Mammary epithelial cell (primary cell): ENCODE measurements at regions of chr1 and their contacts with region 1.

Region 1: GRCh38 chr1:20696397-20697329 is 21.1 kb downstream of the KIF17 start:
- DNase-seq: peak; percentile 86
- H3K4me3 ChIP-seq: peak overlapping the region; percentile 49 to 75 (median 49)
- H3K27ac ChIP-seq: peak overlapping the region; percentile 20
- H3K4me1 ChIP-seq: peaks cover 22% of the 10 kb centered on the region
- H3K27me3 ChIP-seq: no peaks in the 10 kb centered on the region
- CTCF ChIP-seq: peak; percentile 56 to 93

Region 2: DNA sequence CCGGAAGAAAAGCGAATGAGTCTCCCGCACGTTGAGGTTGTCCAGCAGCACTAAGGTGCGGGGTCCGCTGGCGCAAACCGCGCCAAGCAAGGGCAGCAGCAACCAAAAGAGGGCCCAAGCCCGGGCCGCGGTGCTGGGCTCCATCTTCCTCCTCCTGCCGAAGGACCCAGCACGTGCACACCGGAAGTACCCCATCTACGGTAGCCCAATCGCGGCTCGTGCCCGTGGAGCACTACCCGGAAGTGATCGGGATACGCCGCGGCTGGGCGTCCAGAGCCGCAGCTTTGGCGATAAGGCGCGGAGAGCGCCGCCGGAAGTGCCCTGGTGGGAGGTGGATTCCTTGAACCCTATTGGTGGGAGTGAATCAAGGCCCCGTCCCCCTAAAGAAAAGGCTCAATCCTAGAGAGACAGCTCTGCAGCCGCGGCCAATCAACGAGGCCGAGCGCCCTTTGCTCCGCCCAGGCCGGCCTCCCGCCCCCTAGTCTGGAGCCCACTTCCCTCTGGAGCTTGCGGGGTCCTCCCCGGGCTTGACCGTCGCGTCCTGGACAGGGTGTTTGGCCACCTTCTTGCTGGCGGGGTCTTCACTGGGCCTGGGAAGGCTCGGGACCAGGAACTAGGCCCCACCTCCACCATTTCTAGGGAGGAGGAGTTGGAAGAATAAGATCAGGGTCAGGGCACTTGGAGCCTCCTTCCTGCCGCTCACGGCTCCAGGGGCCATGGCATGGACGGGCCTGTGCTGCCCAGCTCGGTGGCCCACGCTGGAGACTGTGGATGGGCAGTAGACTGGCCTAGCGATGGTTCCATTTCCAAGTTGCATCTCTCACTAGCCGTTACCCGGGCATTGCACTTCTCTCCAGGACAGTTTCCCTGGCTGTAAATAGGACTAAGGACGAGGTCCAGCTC is 35.2 kb before region 1 on chr1 and contains the start of gene DDOST:
- CTCF ChIA-PET with region 1: interaction called, 10 read pairs
- dilution Hi-C with region 1: no loop called
- in situ Hi-C with region 1: no loop called
- intact Hi-C with region 1: no loop called
- DNase-seq: peak; percentile 97
- H3K4me3 ChIP-seq: peak within 1 kb of the TSS; percentile 90 to 98 (median 95)
- H3K27ac ChIP-seq: peak within 1 kb of the TSS; percentile 35
- H3K4me1 ChIP-seq: peaks cover 20% of the 10 kb centered on the region
- H3K27me3 ChIP-seq: no peaks in the 10 kb centered on the region
- CTCF ChIP-seq: peak; percentile 32 to 61
- total RNA-seq, gene DDOST: 181 to 238 TPM

Region 3: DNA sequence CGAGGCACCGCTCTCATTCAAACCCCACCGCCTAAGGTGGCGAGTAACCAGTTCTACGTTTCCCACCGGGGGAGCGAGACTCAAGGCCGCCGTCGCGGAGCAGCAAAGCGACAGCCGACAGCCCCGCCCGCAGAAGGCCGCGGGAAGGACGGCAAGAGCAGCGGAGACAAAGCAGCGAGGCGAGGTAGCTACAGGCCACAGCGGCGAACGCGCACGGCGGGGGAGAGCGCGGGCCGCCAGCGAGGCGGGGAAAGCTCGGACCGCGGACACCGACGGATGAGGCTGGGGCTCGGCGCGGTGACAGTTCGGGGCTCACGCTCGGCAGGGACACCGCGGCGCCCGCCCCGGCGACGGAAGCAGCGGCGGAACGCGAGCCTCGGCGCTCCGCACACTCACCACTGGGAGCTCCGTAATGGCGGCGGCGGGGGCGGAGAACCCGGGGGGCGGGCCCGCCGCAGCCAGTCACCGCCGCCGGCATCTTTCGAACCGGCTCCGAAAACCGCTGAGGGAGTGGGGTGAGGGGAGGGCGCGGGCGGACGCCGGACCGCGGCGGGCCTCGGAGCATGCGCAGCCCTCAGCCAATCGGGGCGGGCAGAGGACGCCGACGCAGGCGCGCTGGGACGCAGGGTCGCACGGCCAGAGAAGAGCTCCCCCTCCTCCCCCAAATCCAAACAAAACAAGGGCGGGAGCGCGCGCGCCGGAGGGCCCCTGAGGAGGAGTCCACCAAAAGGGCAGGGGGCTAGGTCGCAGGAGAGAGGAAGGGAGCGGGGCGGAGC is 89.8 kb after region 1 on chr1:
- CTCF ChIA-PET with region 1: no interaction called
- dilution Hi-C with region 1: loop called (anchors 5 kb)
- in situ Hi-C with region 1: no loop called
- intact Hi-C with region 1: loop called (anchors 2 kb)
- DNase-seq: peak; percentile 95
- H3K4me3 ChIP-seq: peak overlapping the region; percentile 77 to 99 (median 94)
- H3K27ac ChIP-seq: peak overlapping the region; percentile 91
- H3K4me1 ChIP-seq: peaks cover 21% of the 10 kb centered on the region
- H3K27me3 ChIP-seq: no peaks in the 10 kb centered on the region
- CTCF ChIP-seq: peak in 1 of 2 donors; percentile 5

Region 4: DNA sequence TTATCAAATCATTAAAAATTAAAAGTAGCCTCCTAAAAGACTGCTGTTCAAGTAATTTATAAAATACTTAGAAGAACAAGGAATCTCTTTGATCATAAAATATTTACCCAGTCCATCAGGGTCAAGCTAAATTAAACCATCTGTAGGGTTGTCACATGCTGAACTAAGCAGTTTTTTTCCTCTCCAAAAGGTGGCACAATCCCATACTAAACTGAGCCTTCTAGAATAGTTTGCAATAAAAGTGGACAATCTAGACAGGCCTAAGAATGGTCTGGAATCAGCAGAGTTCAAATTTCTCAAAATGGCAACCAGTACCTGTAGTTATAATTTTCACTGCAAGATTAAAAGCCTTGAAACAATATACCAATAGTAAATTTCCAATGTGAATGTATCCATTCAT is 285.3 kb after region 1 on chr1:
- CTCF ChIA-PET with region 1: no interaction called
- dilution Hi-C with region 1: no loop called
- in situ Hi-C with region 1: no loop called
- intact Hi-C with region 1: loop called (anchors 10 kb)
- DNase-seq: peak; percentile 16
- H3K4me3 ChIP-seq: no peak overlapping the region
- H3K27ac ChIP-seq: no peak overlapping the region
- H3K4me1 ChIP-seq: peaks cover 11% of the 10 kb centered on the region
- H3K27me3 ChIP-seq: no peaks in the 10 kb centered on the region
- CTCF ChIP-seq: peak in 1 of 2 donors; percentile 44

Region 5: DNA sequence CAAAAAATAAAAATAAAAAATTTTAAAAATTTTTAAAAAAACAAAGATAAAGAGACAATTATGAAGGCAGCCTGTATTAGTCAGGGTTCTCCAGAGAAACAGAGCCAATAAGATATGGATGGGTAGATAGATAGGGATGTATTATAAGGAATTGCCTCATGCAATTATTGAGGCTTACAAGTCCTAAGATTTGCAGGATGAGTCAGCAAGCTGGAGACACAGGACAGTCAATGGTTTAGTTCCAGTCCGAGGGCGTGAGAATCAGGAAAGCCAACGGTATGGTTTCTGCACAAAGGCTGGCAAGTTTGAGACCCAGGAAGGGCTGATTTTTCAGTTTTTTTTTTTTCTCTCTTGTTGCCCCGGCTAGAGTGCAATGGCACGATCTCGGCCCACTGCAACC is 504.1 kb after region 1 on chr1:
- CTCF ChIA-PET with region 1: interaction called, 10 read pairs
- dilution Hi-C with region 1: no loop called
- in situ Hi-C with region 1: loop called in 1 of 2 experiments (anchors 10 kb)
- intact Hi-C with region 1: loop called (anchors 1 kb)
- DNase-seq: no peak
- H3K4me3 ChIP-seq: no peak overlapping the region
- H3K27ac ChIP-seq: no peak overlapping the region
- H3K4me1 ChIP-seq: no peaks in the 10 kb centered on the region
- H3K27me3 ChIP-seq: no peaks in the 10 kb centered on the region
- CTCF ChIP-seq: no peak